Activated CD4-positive, alpha-beta T cell treated with anti-CD3 and anti-CD28 coated beads for 36 hours (primary cell): ENCODE measurements at regions of chr9 and their contacts with region 1.

Region 1: DNA sequence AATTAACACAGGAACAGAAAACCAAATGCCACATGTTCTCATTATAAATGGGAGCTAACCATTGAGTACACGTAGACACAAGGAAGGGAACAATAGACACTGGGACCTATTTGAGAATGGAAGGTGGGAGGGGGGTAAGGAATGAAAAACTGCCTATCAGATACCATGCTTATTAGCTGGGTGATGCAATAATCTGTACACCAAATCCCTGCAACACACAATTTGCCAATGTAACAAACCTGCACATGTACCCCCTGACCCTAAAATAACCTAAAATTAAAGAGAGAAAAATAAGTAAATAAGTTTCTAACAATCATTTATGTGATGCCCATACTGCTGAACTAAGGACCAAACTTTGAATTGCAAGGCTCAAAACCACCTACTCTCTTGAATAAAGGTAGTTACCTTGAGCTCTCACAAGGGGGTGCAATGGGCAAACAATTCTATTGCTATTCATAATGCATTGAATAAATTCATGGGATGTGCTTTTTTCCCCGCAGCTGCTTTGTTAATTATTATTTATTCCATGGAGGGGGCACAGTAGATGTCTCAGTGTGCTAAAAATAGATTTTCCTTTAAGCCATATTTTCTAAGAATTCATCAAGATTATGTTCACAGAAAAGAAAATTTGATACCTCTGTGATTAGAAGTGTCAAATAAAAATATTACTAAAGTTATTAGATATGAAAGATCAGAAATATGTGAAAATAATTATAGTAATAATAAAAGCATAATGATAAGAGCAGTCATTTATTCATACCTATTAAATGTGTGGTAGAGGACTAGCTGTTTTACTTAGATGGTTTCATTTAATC is 76.2 kb upstream of the PTPN3 start:
- DNase-seq: peak; percentile 29
- ATAC-seq: peak; percentile 63
- H3K4me3 Mint-ChIP-seq: no peak overlapping the region
- H3K27ac Mint-ChIP-seq: no peak overlapping the region
- H3K4me1 Mint-ChIP-seq: no peaks in the 10 kb centered on the region
- H3K27me3 Mint-ChIP-seq: peaks cover 2% of the 10 kb centered on the region

Region 2: GRCh38 chr9:109538337-109538736 is 35.9 kb before region 1 on chr9:
- CTCF ChIA-PET with region 1: no interaction called
- POLR2A ChIA-PET with region 1: no interaction called
- intact Hi-C with region 1: no loop called
- DNase-seq: no peak
- ATAC-seq: no peak
- H3K4me3 Mint-ChIP-seq: no peak overlapping the region
- H3K27ac Mint-ChIP-seq: no peak overlapping the region
- H3K4me1 Mint-ChIP-seq: no peaks in the 10 kb centered on the region
- H3K27me3 Mint-ChIP-seq: peaks cover 17% of the 10 kb centered on the region

Region 3: DNA sequence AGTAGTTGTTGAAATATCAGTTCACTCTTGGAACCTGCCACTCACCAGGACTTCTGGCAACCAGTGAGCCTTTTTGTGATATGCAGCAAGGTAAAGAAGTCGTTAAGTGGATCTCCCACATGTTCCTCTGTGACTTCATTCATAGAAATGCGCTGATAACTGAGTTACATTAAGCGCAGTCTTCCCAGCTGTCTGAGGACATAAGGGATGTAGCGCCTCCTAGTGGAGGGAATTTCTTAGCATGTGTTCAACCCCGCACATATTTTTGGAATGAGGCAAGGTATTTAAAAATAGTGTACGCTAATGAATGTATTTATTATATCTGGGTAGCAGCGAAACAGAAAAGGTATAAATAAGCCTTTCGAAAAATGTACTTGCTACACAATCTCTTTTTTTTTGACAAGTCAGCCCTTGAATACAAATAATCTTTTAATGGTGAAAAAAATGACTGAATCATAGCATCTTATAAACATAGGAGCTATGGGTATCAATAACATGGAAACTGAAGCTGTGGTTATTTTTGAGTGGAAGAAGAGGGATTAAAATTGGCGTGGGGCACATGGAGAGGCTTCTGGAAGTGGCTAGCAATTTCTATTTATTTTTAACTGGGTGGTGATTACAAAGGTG is 243.7 kb after region 1 on chr9:
- CTCF ChIA-PET with region 1: interaction called, 20 read pairs
- POLR2A ChIA-PET with region 1: no interaction called
- intact Hi-C with region 1: loop called (anchors 1 to 2 kb)
- DNase-seq: peak; percentile 67
- ATAC-seq: peak; percentile 71
- H3K4me3 Mint-ChIP-seq: no peak overlapping the region
- H3K27ac Mint-ChIP-seq: no peak overlapping the region
- H3K4me1 Mint-ChIP-seq: no peaks in the 10 kb centered on the region
- H3K27me3 Mint-ChIP-seq: peaks cover 16% of the 10 kb centered on the region

Region 4: GRCh38 chr9:109880277-109881169 is 306.2 kb after region 1 on chr9:
- CTCF ChIA-PET with region 1: no interaction called
- POLR2A ChIA-PET with region 1: no interaction called
- intact Hi-C with region 1: loop called (anchors 10 kb)
- DNase-seq: peak; percentile 50
- ATAC-seq: peak; percentile 90
- H3K4me3 Mint-ChIP-seq: no peak overlapping the region
- H3K27ac Mint-ChIP-seq: peak overlapping the region; percentile 51
- H3K4me1 Mint-ChIP-seq: peaks cover 8% of the 10 kb centered on the region
- H3K27me3 Mint-ChIP-seq: peaks cover 6% of the 10 kb centered on the region

Region 5: GRCh38 chr9:110058304-110058953 is 484.2 kb after region 1 on chr9:
- CTCF ChIA-PET with region 1: interaction called, 3 read pairs
- POLR2A ChIA-PET with region 1: no interaction called
- intact Hi-C with region 1: loop called in 1 of 2 experiments (anchors 5 kb)
- DNase-seq: peak; percentile 71
- ATAC-seq: peak; percentile 66
- H3K4me3 Mint-ChIP-seq: no peak overlapping the region
- H3K27ac Mint-ChIP-seq: peak overlapping the region; percentile 48
- H3K4me1 Mint-ChIP-seq: peaks cover 9% of the 10 kb centered on the region
- H3K27me3 Mint-ChIP-seq: no peaks in the 10 kb centered on the region